ENCODE measurements at regions of chr1 and their contacts with region 1.

Region 1: GRCh38 chr1:96721416-96722160 is at the start of gene PTBP2:
- DNase-seq: peak; percentile 79
- H3K4me3 Mint-ChIP-seq: peak within 1 kb of the TSS; percentile 95
- H3K27ac Mint-ChIP-seq: peak within 1 kb of the TSS; percentile 94
- H3K4me1 Mint-ChIP-seq: peaks cover 22% of the 10 kb centered on the region
- H3K27me3 Mint-ChIP-seq: peaks cover 15% of the 10 kb centered on the region
- total RNA-seq, gene PTBP2: 17.7 and 19.7 TPM in 2 replicates

Region 2: GRCh38 chr1:94962409-94963265 is 1759.0 kb before region 1 on chr1:
- intact Hi-C with region 1: loop called (anchors 10 kb)
- DNase-seq: peak; percentile 19
- H3K4me3 Mint-ChIP-seq: peak overlapping the region; percentile 89
- H3K27ac Mint-ChIP-seq: peak overlapping the region; percentile 92
- H3K4me1 Mint-ChIP-seq: peaks cover 5% of the 10 kb centered on the region
- H3K27me3 Mint-ChIP-seq: no peaks in the 10 kb centered on the region

Region 3: DNA sequence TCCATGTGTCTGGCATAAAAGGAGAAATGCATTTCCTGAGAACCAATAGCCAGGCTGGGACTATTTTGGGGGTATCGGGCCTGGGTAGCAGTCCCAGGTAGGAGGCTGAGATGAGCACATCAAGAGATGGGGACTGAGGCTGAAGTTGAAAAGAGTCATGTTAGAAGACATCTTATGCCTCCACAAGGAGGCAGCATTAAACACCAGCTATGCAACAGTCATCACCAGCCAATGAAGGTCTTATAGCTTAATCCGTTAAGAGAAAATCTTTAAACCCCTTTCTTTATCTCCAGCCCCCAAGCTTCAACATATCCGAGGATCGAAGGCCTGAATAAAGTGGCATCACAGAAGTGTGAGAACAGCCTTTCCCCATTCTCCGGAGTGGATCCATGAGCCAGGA is 640.7 kb before region 1 on chr1:
- intact Hi-C with region 1: no loop called
- DNase-seq: no peak
- H3K4me3 Mint-ChIP-seq: no peak overlapping the region
- H3K27ac Mint-ChIP-seq: no peak overlapping the region
- H3K4me1 Mint-ChIP-seq: no peaks in the 10 kb centered on the region
- H3K27me3 Mint-ChIP-seq: no peaks in the 10 kb centered on the region

Region 4: GRCh38 chr1:96782856-96783255 is 61.3 kb after region 1 on chr1:
- intact Hi-C with region 1: loop called (anchors 5 kb)
- DNase-seq: no peak
- H3K4me3 Mint-ChIP-seq: no peak overlapping the region
- H3K27ac Mint-ChIP-seq: no peak overlapping the region
- H3K4me1 Mint-ChIP-seq: no peaks in the 10 kb centered on the region
- H3K27me3 Mint-ChIP-seq: no peaks in the 10 kb centered on the region

Region 5: DNA sequence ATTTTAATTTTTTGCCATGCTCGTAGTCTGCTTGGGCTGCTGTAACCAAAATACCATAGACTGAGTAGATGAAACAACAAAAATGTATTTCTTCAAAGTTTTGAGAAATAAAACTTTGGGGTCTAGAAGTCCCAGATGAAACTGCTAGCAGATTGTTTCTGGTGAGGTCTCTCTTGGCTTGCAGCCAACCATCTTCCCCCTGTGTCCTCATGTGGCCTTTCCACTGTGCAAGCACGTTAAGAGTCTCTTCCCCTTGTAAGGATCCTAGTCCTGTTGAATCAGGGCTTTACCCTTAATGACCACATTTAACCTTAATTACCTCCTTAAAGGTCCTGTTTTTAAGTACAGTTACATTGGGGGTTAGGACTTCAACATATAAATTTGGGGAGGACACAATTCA is 86.6 kb after region 1 on chr1:
- intact Hi-C with region 1: loop called (anchors 5 kb)
- DNase-seq: no peak
- H3K4me3 Mint-ChIP-seq: no peak overlapping the region
- H3K27ac Mint-ChIP-seq: no peak overlapping the region
- H3K4me1 Mint-ChIP-seq: no peaks in the 10 kb centered on the region
- H3K27me3 Mint-ChIP-seq: no peaks in the 10 kb centered on the region